ENCODE measurements at regions of chr13 and their contacts with region 1.

Region 1: GRCh38 chr13:104571161-104571892 is 1505.1 kb upstream of the SLC10A2 start:
- DNase-seq: peak; percentile 41
- H3K4me3 ChIP-seq: peak overlapping the region; percentile 33
- H3K27ac ChIP-seq: no peak overlapping the region
- H3K27me3 ChIP-seq: no peaks in the 10 kb centered on the region
- CTCF ChIP-seq: peak; percentile 92

Region 2: DNA sequence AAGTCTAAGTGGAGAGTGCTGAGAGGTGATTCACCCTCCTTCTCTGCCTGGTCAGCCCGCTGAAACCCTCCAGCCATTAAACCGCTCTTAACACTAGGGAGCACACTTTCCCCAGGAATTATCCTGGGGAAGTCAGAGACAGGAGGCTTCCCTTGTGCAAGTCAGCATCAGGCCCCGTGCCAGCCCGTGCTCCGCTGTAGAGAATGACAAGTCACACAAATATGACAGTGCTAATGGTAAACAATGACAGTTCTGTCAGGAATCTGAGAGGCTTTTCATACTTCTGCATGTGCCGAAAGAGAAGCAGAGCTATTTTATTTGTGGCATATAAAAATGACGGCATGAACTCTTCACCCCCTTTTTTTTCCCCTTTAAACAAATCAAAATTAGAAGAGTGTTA is 688.2 kb before region 1 on chr13:
- CTCF ChIA-PET with region 1: interaction called, 21 read pairs
- POLR2A ChIA-PET with region 1: no interaction called
- DNase-seq: peak; percentile 89
- H3K4me3 ChIP-seq: peak overlapping the region; percentile 23
- H3K27ac ChIP-seq: no peak overlapping the region
- H3K27me3 ChIP-seq: no peaks in the 10 kb centered on the region
- CTCF ChIP-seq: peak; percentile 75

Region 3: GRCh38 chr13:104318121-104318520 is 253.2 kb before region 1 on chr13:
- CTCF ChIA-PET with region 1: interaction called, 12 read pairs
- POLR2A ChIA-PET with region 1: no interaction called
- DNase-seq: no peak
- H3K4me3 ChIP-seq: no peak overlapping the region
- H3K27ac ChIP-seq: no peak overlapping the region
- H3K27me3 ChIP-seq: no peaks in the 10 kb centered on the region
- CTCF ChIP-seq: peak; percentile 50

Region 4: GRCh38 chr13:104372095-104372655 is 199.2 kb before region 1 on chr13:
- CTCF ChIA-PET with region 1: no interaction called
- POLR2A ChIA-PET with region 1: no interaction called
- DNase-seq: no peak
- H3K4me3 ChIP-seq: no peak overlapping the region
- H3K27ac ChIP-seq: no peak overlapping the region
- H3K27me3 ChIP-seq: no peaks in the 10 kb centered on the region
- CTCF ChIP-seq: no peak

Region 5: DNA sequence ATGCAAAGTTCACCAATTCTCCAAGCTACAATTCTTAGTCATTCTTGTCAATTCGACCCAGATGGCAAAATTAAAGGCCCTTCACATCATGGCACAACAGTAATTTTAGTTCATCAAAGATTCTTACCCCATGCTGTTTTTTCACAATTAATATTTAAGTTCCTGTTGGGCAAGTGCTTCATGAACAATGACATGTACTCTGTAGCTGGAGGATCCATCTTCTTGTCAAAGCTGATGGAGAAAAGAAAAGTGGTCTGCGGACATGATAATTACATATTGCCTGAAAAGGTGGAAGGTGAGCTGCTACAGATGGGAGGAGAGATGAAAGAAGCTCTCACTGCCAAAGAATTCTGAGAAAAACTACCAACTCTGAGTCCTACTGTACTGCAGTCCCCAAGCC is 134.8 kb before region 1 on chr13:
- CTCF ChIA-PET with region 1: no interaction called
- POLR2A ChIA-PET with region 1: no interaction called
- DNase-seq: no peak
- H3K4me3 ChIP-seq: no peak overlapping the region
- H3K27ac ChIP-seq: no peak overlapping the region
- H3K27me3 ChIP-seq: no peaks in the 10 kb centered on the region
- CTCF ChIP-seq: no peak

Region 6: GRCh38 chr13:104586051-104586746 is 14.9 kb after region 1 on chr13:
- CTCF ChIA-PET with region 1: interaction called, 25 read pairs
- POLR2A ChIA-PET with region 1: no interaction called
- DNase-seq: peak; percentile 65
- H3K4me3 ChIP-seq: peak overlapping the region; percentile 11
- H3K27ac ChIP-seq: no peak overlapping the region
- H3K27me3 ChIP-seq: no peaks in the 10 kb centered on the region
- CTCF ChIP-seq: no peak

Region 7: DNA sequence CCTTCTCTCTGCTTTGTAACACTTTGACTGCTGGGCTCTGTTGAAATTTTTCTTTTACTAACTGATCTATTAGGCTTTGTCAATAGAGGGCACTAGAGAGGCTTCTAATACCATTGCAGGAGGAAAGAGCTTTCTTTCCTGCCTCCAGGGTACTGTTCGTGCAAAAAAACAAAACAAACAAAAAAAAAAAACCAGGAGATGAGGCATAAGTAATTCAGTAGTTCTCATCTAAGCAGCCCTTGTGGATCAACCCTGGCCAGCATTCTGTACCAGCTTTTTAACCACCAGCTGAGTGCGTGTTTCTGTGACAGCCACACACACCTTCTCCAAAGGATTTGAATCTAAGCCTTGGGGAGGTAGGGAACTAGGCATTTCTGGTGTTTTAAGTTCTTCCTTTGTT is 202.4 kb after region 1 on chr13:
- CTCF ChIA-PET with region 1: interaction called, 12 read pairs
- POLR2A ChIA-PET with region 1: no interaction called
- DNase-seq: peak; percentile 21
- H3K4me3 ChIP-seq: no peak overlapping the region
- H3K27ac ChIP-seq: no peak overlapping the region
- H3K27me3 ChIP-seq: no peaks in the 10 kb centered on the region
- CTCF ChIP-seq: peak; percentile 78

Region 8: DNA sequence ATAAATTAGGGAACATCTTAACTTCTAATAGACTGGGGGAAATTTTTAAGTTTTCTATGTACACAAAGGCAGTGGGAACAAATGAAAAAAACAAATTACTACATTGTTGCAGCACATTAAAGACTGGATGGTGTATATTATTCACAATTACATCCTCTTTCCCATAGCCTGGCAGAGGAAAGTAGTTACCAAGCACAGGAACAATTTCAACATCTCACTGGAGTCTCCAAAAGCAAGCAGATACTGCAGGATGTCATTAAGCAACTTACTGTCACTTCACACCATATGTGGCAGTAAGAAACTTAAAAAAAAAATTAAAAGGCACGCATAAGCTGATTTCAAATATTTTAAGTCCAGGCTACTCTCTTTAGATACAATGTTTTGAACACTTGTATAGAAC is 1970.5 kb after region 1 on chr13:
- CTCF ChIA-PET with region 1: interaction called, 46 read pairs
- POLR2A ChIA-PET with region 1: no interaction called
- DNase-seq: no peak
- H3K4me3 ChIP-seq: no peak overlapping the region
- H3K27ac ChIP-seq: no peak overlapping the region
- H3K27me3 ChIP-seq: no peaks in the 10 kb centered on the region
- CTCF ChIP-seq: no peak